ENCODE measurements at regions of chr21 and their contacts with region 1.

Region 1: DNA sequence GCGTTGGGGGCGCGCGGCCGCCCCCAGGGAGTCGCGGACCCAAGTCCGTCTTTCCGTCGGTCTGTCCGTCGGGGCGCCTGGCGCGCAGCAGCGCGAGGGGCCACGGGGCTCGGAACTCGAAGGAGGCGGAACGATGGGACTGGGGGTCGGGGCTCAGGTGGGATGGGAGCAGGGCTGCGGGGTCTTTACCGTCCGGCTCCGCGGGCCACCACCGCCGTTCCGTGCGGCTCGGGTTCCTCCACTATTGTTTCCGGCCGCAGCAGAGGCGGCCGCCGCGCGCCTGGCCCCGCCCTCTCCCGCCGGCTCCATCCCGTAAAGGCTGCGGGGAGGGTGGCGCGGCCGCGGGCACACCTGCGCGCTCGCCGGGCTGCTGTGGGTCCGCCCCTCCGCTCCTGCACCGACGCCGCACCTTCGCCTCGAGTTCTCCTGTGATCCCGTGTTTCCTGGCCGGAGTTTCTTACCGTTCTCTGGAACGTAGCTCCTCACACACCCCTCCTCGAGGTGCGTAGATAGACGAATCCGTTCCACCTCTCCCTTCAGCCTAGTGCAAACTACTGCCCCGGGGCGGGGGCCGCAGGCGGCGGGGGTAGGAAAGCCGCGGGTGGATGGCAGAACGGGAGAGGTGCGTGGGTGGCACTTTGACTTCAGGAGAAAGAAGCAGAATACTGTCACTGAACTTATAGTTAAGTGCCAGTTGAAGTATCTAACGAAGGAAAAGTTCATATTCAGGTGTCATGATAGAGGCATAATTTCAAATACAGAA is at the start of gene C21orf91:
- DNase-seq: peak; percentile 92
- H3K4me3 ChIP-seq: peak within 1 kb of the TSS; percentile 59 to 95 (median 94)
- H3K27ac ChIP-seq: peak within 1 kb of the TSS; percentile 86 to 93 (median 88)
- H3K4me1 ChIP-seq: peaks cover 0 to 28% (median 18%) of the 10 kb centered on the region in 4 donors
- H3K27me3 ChIP-seq: no peaks in the 10 kb centered on the region
- CTCF ChIP-seq: no peak
- EP300 ChIP-seq: no peak
- POLR2A ChIP-seq: peak; percentile 55 to 60
- total RNA-seq, gene C21orf91: 6.4 to 12.8 (median 8.4) TPM

Region 2: GRCh38 chr21:17611414-17612022 is 207.8 kb before region 1 on chr21:
- intact Hi-C with region 1: loop called (anchors 5 kb)
- DNase-seq: peak; percentile 94
- H3K4me3 ChIP-seq: peak overlapping the region; percentile 85 to 90 (median 88)
- H3K27ac ChIP-seq: peak overlapping the region; percentile 94 to 96 (median 96)
- H3K4me1 ChIP-seq: peaks cover 0 to 42% (median 36%) of the 10 kb centered on the region in 4 donors
- H3K27me3 ChIP-seq: no peaks in the 10 kb centered on the region
- CTCF ChIP-seq: peak in 1 of 4 experiments; percentile 18
- EP300 ChIP-seq: no peak
- POLR2A ChIP-seq: no peak